Colonic mucosa (tissue), 4 donors: ENCODE measurements at regions of chrX and their contacts with region 1.

Region 1: DNA sequence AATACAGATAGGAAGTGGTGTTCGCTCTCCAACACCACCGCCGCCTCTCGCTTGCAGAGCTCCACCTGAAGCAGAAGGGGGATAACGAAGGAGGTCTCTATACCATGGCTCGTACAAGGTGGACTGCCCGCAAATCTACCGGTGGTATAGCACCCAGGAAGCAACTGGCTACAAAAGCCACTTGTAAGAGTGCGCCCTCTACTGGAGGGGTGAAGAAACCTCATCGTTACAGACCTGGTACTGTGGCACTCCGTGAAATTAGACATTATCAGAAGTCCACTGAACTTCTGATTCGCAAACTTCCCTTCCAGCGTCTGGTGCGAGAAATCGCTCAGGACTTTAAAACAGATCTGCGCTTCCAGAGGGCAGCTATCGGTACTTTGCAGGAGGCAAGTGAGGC is 5.2 kb upstream of the BMP15 start:
- DNase-seq: peak; percentile 21
- H3K4me3 ChIP-seq: no peak overlapping the region
- H3K27ac ChIP-seq: no peak overlapping the region
- H3K4me1 ChIP-seq: no peaks in the 10 kb centered on the region
- H3K27me3 ChIP-seq: peaks cover 9% of the 10 kb centered on the region
- CTCF ChIP-seq: peak; percentile 44

Region 2: DNA sequence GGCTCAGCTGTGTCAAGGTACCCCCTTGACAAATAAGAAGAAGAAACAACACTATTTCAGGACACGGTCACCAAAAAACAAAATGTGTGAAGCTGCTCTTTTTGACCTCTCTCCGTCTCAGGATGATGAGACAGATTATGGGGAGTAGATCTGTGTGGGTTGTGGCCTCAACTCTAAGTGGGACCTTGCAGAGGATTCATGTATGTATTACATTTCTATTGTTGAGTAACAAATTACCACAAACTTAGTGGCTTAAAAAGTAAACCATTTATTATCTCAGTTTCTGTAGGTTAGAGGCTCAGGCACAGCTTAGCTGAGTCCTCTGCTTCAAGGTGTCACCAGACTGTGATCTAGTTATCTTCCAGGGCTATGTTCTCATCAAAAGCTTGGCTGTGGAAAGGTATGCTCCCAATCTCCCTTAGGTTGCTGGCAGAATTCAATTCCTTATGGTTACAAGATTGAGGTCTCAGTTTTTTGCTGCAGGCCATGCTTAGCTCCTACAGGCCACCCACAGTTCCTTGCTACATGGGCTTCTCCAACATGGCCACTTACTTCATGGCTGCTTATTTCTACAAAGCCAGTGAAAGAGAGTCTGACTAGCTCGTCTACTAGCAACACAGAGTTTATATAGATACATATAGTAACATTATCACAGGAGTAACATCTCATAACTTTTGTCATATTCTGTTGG is 462.8 kb before region 1 on chrX:
- intact Hi-C with region 1: no loop called
- DNase-seq: no peak
- H3K4me3 ChIP-seq: no peak overlapping the region
- H3K27ac ChIP-seq: no peak overlapping the region
- H3K4me1 ChIP-seq: no peaks in the 10 kb centered on the region
- H3K27me3 ChIP-seq: no peaks in the 10 kb centered on the region
- CTCF ChIP-seq: no peak

Region 3: GRCh38 chrX:50747471-50747900 is 157.8 kb before region 1 on chrX:
- intact Hi-C with region 1: loop called (anchors 2 kb)
- DNase-seq: no peak
- H3K4me3 ChIP-seq: no peak overlapping the region
- H3K27ac ChIP-seq: no peak overlapping the region
- H3K4me1 ChIP-seq: no peaks in the 10 kb centered on the region
- H3K27me3 ChIP-seq: peaks cover 4% of the 10 kb centered on the region
- CTCF ChIP-seq: no peak